ENCODE measurements at regions of chr2 and their contacts with region 1.

Region 1: DNA sequence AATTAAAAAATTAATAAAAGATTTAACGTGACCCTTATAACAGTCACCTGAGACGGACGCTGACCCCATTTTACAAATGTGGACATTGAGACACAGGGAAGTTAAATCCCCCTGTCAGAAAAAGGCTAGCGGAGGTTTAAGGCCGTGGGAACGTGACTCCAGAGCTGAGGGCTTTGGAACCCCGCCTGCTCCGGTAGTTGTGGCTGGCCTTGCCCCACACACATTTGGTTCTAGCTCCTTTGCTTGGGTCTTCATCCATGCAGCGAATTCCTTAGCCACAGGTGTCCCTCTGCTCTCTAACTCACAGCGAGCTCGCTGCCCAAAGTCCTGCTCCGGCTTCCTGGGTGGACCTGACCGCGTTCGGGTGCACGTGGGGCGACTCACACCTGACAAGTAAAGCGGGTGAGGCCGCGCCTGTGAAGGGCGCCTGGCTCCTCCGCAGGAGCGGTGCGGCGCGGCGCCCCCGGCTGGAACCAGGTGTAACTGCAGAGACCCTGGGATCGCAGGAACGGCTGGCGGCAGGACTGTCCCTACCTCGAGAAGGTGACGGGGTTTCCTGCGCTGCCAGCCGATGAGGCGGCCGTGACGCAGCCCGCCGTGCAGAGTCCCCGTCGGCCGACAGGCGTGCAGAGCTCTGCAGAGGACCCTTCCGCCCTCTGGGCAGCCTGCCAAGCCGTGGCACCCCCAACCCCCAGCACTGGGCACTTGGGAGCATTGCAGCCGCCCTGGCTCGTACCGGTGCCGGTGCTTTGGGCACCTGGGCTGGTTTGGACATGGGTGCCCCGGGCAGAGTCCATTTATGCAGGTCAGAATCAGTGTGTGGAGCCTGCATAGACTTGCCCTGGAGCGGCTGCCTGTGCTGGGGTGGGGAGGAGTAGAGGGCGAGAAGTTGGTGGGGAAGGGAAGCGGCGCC is 2.4 kb upstream of the PROC start:
- DNase-seq: peak; percentile 72
- ATAC-seq: peak; percentile 93
- H3K4me3 Mint-ChIP-seq: peak overlapping the region; percentile 80
- H3K27ac Mint-ChIP-seq: no peak overlapping the region
- H3K4me1 Mint-ChIP-seq: peaks cover 49% of the 10 kb centered on the region
- H3K27me3 Mint-ChIP-seq: no peaks in the 10 kb centered on the region
- CTCF ChIP-seq: no peak

Region 2: GRCh38 chr2:127293748-127294562 is 121.9 kb before region 1 on chr2 and contains the start of gene ERCC3:
- CTCF ChIA-PET with region 1: interaction called, 3 read pairs
- POLR2A ChIA-PET with region 1: no interaction called
- intact Hi-C with region 1: loop called (anchors 2 kb)
- DNase-seq: peak; percentile 78
- ATAC-seq: peak; percentile 98
- H3K4me3 Mint-ChIP-seq: peak within 1 kb of the TSS; percentile 97
- H3K27ac Mint-ChIP-seq: peak within 1 kb of the TSS; percentile 95
- H3K4me1 Mint-ChIP-seq: peaks cover 25% of the 10 kb centered on the region
- H3K27me3 Mint-ChIP-seq: no peaks in the 10 kb centered on the region
- CTCF ChIP-seq: no peak
- total RNA-seq, gene ERCC3: 55.9 and 65.6 TPM in 2 replicates

Region 3: GRCh38 chr2:127313406-127313805 is 102.4 kb before region 1 on chr2:
- CTCF ChIA-PET with region 1: no interaction called
- POLR2A ChIA-PET with region 1: no interaction called
- intact Hi-C with region 1: loop called (anchors 5 kb)
- DNase-seq: no peak
- ATAC-seq: peak; percentile 95
- H3K4me3 Mint-ChIP-seq: no peak overlapping the region
- H3K27ac Mint-ChIP-seq: no peak overlapping the region
- H3K4me1 Mint-ChIP-seq: peaks cover 18% of the 10 kb centered on the region
- H3K27me3 Mint-ChIP-seq: no peaks in the 10 kb centered on the region
- CTCF ChIP-seq: no peak

Region 4: GRCh38 chr2:127355386-127356008 is 60.4 kb before region 1 on chr2:
- CTCF ChIA-PET with region 1: interaction called, 8 read pairs
- POLR2A ChIA-PET with region 1: no interaction called
- intact Hi-C with region 1: loop called (anchors 1 kb)
- DNase-seq: no peak
- ATAC-seq: peak; percentile 47
- H3K4me3 Mint-ChIP-seq: no peak overlapping the region
- H3K27ac Mint-ChIP-seq: no peak overlapping the region
- H3K4me1 Mint-ChIP-seq: peaks cover 58% of the 10 kb centered on the region
- H3K27me3 Mint-ChIP-seq: no peaks in the 10 kb centered on the region
- CTCF ChIP-seq: peak; percentile 54

Region 5: GRCh38 chr2:127498386-127498785 is 82.5 kb after region 1 on chr2:
- CTCF ChIA-PET with region 1: no interaction called
- POLR2A ChIA-PET with region 1: no interaction called
- intact Hi-C with region 1: no loop called
- DNase-seq: no peak
- ATAC-seq: no peak
- H3K4me3 Mint-ChIP-seq: no peak overlapping the region
- H3K27ac Mint-ChIP-seq: no peak overlapping the region
- H3K4me1 Mint-ChIP-seq: no peaks in the 10 kb centered on the region
- H3K27me3 Mint-ChIP-seq: no peaks in the 10 kb centered on the region
- CTCF ChIP-seq: no peak

Region 6: GRCh38 chr2:128241896-128242295 is 826.0 kb after region 1 on chr2:
- CTCF ChIA-PET with region 1: no interaction called
- POLR2A ChIA-PET with region 1: no interaction called
- intact Hi-C with region 1: no loop called
- DNase-seq: no peak
- ATAC-seq: no peak
- H3K4me3 Mint-ChIP-seq: no peak overlapping the region
- H3K27ac Mint-ChIP-seq: no peak overlapping the region
- H3K4me1 Mint-ChIP-seq: no peaks in the 10 kb centered on the region
- H3K27me3 Mint-ChIP-seq: no peaks in the 10 kb centered on the region
- CTCF ChIP-seq: no peak

Measured in activated B cell treated with CpG ODN at 0.5 μM for 24 hours (primary cell).